Activated B cell treated with CpG ODN at 0.5 μM for 24 hours (primary cell): ENCODE measurements at regions of chr4 and their contacts with region 1.

Region 1: GRCh38 chr4:185142912-185143595 is at the start of gene SLC25A4:
- DNase-seq: peak; percentile 92
- ATAC-seq: peak; percentile 97
- H3K4me3 Mint-ChIP-seq: peak within 1 kb of the TSS; percentile 93
- H3K27ac Mint-ChIP-seq: peak within 1 kb of the TSS; percentile 94
- H3K4me1 Mint-ChIP-seq: peaks cover 13% of the 10 kb centered on the region
- H3K27me3 Mint-ChIP-seq: peaks cover 5% of the 10 kb centered on the region
- CTCF ChIP-seq: no peak
- total RNA-seq, gene SLC25A4: 8.9 and 9.4 TPM in 2 replicates

Region 2: GRCh38 chr4:183659029-183659871 is 1483.8 kb before region 1 on chr4 and contains the starts of genes RWDD4 and TRAPPC11:
- CTCF ChIA-PET with region 1: no interaction called
- POLR2A ChIA-PET with region 1: no interaction called
- intact Hi-C with region 1: loop called (anchors 5 kb)
- DNase-seq: peak; percentile 87
- ATAC-seq: peak; percentile 98
- H3K4me3 Mint-ChIP-seq: peak within 1 kb of the TSS; percentile 93
- H3K27ac Mint-ChIP-seq: peak within 1 kb of the TSS; percentile 92
- H3K4me1 Mint-ChIP-seq: peaks cover 33% of the 10 kb centered on the region
- H3K27me3 Mint-ChIP-seq: no peaks in the 10 kb centered on the region
- CTCF ChIP-seq: no peak
- total RNA-seq, gene RWDD4: 14.6 and 15.4 TPM in 2 replicates
- total RNA-seq, gene TRAPPC11: 42.9 and 45.2 TPM in 2 replicates

Region 3: GRCh38 chr4:185127021-185127925 is 15.8 kb before region 1 on chr4:
- CTCF ChIA-PET with region 1: no interaction called
- POLR2A ChIA-PET with region 1: no interaction called
- intact Hi-C with region 1: no loop called
- DNase-seq: peak; percentile 28
- ATAC-seq: peak; percentile 41
- H3K4me3 Mint-ChIP-seq: peak overlapping the region; percentile 78
- H3K27ac Mint-ChIP-seq: no peak overlapping the region
- H3K4me1 Mint-ChIP-seq: peaks cover 18% of the 10 kb centered on the region
- H3K27me3 Mint-ChIP-seq: peaks cover 22% of the 10 kb centered on the region
- CTCF ChIP-seq: no peak

Region 4: DNA sequence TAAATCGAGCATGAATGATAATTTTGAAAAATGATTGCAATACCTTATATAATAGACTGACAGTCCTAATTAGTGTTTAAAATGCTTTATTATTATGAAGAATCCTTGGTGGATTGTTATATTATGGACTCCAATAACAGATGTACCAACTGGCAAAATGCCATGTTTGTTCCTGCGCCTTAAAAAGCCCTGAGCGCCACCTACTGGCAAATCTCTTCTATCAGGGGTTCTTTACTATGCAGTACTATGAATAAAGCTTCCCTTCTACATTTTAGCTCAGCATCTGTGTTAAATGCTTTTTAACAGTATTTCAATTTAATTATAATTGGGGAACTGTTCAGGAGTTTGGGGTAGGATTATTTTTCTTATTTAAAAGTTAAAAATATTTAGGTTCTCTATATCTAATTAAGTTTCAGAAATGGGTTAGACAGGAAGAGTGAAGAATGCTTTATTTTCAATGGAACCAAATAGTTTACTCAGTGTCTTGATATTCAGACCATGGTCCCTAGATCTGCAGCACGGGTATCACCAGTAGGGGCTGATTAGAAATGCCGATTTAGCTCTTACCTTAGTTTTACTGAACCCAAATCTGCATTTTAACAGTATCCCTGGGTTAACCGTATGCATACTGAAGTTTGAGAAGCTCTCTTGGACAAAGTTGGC is 40.7 kb after region 1 on chr4:
- CTCF ChIA-PET with region 1: interaction called, 4 read pairs
- POLR2A ChIA-PET with region 1: interaction called, 3 read pairs
- intact Hi-C with region 1: loop called (anchors 1 kb)
- DNase-seq: no peak
- ATAC-seq: peak; percentile 66
- H3K4me3 Mint-ChIP-seq: no peak overlapping the region
- H3K27ac Mint-ChIP-seq: no peak overlapping the region
- H3K4me1 Mint-ChIP-seq: peaks cover 9% of the 10 kb centered on the region
- H3K27me3 Mint-ChIP-seq: no peaks in the 10 kb centered on the region
- CTCF ChIP-seq: peak; percentile 72

Region 5: DNA sequence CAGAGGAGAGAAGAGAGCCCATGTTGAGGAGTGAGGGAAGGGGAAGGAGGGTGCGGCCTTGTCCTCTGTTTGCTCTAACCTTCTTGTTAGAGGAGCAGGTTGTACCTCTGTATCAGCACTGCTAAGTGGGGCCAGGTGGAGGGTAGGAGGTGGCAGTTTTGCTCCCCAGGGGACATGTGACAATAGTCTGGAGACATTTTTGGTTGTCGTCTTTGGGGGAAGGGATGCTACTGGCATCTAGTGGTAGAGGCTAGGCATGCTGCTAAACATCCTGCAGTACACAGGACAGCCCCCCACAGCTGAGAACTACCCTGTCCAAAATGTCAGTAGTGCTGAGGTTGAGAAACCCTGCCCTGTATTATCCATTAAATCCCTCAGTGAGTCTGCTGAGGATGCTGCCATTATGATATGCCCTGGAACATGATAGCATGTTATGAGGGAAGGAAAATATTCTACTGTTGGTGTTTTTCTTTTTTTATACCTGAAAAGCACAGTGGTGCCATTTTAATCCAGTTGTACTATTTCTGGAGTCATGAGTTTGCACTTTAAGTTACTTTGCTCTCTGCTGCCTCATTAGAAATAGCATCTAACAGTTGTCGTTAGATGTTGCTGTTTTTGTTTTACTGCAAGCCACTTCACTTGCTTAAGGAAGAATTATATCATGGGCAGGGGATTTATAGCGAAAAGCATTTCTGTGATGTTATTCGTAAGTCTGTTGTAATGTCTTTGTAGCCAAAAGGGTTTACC is 162.1 kb after region 1 on chr4:
- CTCF ChIA-PET with region 1: no interaction called
- POLR2A ChIA-PET with region 1: no interaction called
- intact Hi-C with region 1: loop called (anchors 2 kb)
- DNase-seq: no peak
- ATAC-seq: peak; percentile 86
- H3K4me3 Mint-ChIP-seq: no peak overlapping the region
- H3K27ac Mint-ChIP-seq: peak overlapping the region; percentile 2
- H3K4me1 Mint-ChIP-seq: peaks cover 35% of the 10 kb centered on the region
- H3K27me3 Mint-ChIP-seq: no peaks in the 10 kb centered on the region
- CTCF ChIP-seq: no peak

Region 6: DNA sequence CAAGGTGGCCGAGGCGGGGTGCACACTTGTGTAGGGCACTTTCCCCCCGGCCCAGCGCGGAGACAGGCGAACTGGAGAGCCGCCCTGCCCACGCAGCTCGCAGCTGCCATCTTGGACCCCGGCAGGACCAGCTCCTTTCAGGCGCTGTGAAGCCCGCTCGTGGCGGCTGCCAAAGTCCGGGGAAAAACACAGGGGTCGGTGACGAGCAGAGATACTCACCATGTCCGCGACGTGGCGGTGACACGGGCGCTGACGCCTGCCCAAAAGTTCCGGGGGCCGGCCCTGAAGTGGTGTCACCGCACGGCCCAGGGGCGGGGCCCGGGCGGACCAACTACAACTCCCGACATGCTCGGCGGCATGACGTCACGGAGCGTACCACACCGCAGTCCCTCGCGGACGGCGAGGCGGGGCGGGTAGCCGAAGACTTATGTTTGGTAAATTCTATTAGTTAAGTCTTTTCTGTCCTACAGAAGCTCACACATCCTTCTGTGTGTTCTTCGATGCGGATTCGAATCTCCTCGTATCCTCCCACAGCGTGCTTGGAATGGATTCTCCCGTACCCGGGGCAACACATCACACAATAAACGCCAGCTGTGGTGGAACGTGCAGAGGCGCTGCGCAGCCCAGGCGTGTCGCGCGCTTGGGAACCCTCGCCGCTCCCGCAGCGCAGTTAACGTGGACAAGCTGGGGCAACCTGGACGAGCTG is 282.7 kb after region 1 on chr4 and contains the start of gene UFSP2:
- CTCF ChIA-PET with region 1: no interaction called
- POLR2A ChIA-PET with region 1: interaction called, 6 read pairs
- intact Hi-C with region 1: loop called (anchors 2 kb)
- DNase-seq: peak; percentile 92
- ATAC-seq: peak; percentile 86
- H3K4me3 Mint-ChIP-seq: peak within 1 kb of the TSS; percentile 89
- H3K27ac Mint-ChIP-seq: peak within 1 kb of the TSS; percentile 99
- H3K4me1 Mint-ChIP-seq: peaks cover 17% of the 10 kb centered on the region
- H3K27me3 Mint-ChIP-seq: no peaks in the 10 kb centered on the region
- CTCF ChIP-seq: no peak
- total RNA-seq, gene UFSP2: 20.1 and 21.6 TPM in 2 replicates

Region 7: GRCh38 chr4:185597532-185598188 is 454.6 kb after region 1 on chr4:
- CTCF ChIA-PET with region 1: no interaction called
- POLR2A ChIA-PET with region 1: no interaction called
- intact Hi-C with region 1: loop called (anchors 10 kb)
- DNase-seq: peak; percentile 49
- ATAC-seq: peak; percentile 72
- H3K4me3 Mint-ChIP-seq: no peak overlapping the region
- H3K27ac Mint-ChIP-seq: no peak overlapping the region
- H3K4me1 Mint-ChIP-seq: no peaks in the 10 kb centered on the region
- H3K27me3 Mint-ChIP-seq: peaks cover 19% of the 10 kb centered on the region
- CTCF ChIP-seq: peak; percentile 100

Region 8: DNA sequence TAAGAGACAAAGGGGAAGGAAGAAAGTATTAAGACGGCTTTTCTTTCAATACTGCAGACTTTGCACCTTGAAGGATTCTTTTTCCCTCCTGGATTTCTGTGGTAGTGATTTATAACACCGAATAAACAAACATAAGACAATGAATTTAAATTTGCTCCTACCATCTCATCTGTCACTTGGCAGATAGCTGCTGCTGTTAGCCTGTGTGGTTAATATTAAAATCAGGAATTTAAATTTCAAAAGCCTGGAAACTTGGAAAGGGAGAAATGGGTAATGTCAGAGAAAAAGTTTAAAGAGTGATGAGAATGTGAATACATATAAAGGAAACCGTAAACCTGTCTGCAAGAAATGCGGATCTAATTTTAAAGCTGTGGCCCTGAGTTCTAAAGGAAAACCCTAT is 964.9 kb after region 1 on chr4:
- CTCF ChIA-PET with region 1: no interaction called
- POLR2A ChIA-PET with region 1: no interaction called
- intact Hi-C with region 1: no loop called
- DNase-seq: no peak
- ATAC-seq: no peak
- H3K4me3 Mint-ChIP-seq: no peak overlapping the region
- H3K27ac Mint-ChIP-seq: no peak overlapping the region
- H3K4me1 Mint-ChIP-seq: peaks cover 9% of the 10 kb centered on the region
- H3K27me3 Mint-ChIP-seq: peaks cover 37% of the 10 kb centered on the region
- CTCF ChIP-seq: no peak